ENCODE measurements at regions of chr12 and their contacts with region 1.

Region 1: DNA sequence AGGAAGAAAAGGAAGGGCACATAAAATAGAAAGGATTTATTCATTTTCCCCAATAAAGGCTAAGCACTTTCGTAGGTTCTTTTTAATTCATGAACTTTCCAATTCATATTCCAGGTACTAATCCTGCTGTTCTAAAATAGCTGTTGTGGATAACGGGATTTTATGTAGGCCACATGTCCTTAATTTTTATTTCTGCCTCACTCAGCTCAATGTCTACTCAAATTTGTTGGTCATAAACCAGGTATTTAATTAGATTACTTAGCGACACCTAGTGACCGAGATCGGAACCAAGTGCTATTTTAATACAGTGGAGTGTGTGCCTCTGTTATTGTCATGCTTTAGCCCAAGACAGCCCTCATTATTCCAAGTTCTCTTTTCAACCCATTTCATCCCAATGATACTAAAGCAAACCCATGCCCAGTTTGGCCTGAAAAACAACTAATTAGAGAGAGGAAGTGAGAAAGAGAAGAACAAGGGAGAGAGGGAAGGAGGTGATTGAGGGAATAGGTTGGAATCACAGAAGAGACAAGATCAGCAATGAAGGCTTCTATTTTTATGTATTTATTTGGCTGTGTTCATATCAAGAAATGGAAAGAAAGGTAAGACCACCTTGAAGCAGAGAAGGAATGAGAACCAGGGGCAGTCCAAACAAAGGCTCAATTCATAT is 45.9 kb upstream of the IFNG-AS1 start:
- DNase-seq: peak; percentile 57 to 77 (median 68)
- H3K4me3 ChIP-seq: no peak overlapping the region
- H3K27ac ChIP-seq: no peak overlapping the region
- H3K4me1 ChIP-seq: no peaks in the 10 kb centered on the region
- H3K27me3 ChIP-seq: no peaks in the 10 kb centered on the region

Region 2: DNA sequence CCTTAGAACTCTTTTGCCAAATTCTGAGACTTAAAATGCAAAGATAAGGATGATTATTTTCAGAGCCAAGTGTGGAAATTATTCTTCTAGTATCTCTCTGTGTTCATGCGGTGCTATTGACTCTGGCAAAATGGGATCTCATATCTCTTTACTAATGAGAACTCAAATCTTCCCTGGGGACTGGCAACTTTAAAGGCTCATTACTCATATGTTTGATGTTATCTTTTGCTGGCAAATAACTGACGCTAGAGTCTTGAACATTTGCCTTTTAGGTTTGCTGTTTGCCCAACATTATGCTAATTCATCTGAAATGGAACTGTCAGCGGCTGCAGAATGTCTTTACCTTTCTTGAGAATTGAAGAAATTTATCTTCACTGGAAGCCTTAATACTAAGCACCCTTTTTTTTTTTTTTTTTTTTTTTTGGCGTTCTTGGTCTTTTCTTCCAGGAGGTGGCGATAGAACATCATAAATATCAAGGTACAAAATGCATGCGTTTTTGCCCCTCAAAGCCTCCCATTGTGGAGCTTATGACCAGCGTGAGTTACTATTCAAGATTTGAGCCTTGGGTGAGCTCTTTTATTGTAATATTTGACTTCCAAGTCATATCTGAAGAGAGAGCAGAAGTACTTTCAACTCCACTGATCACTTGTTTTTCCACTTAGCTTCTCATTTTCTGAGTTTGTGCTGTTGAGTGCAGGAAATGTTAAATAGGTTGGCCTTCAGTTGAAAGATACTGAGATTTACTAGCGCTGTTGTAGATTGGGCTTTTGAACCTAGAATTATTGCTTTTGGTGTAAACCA is 587.6 kb before region 1 on chr12:
- CTCF ChIA-PET with region 1: interaction called, 78 read pairs
- POLR2A ChIA-PET with region 1: no interaction called
- DNase-seq: peak; percentile 54 to 82 (median 78)
- H3K4me3 ChIP-seq: no peak overlapping the region
- H3K27ac ChIP-seq: no peak overlapping the region
- H3K4me1 ChIP-seq: peaks cover 0 to 15% (median 6%) of the 10 kb centered on the region in 4 experiments
- H3K27me3 ChIP-seq: no peaks in the 10 kb centered on the region

Region 3: DNA sequence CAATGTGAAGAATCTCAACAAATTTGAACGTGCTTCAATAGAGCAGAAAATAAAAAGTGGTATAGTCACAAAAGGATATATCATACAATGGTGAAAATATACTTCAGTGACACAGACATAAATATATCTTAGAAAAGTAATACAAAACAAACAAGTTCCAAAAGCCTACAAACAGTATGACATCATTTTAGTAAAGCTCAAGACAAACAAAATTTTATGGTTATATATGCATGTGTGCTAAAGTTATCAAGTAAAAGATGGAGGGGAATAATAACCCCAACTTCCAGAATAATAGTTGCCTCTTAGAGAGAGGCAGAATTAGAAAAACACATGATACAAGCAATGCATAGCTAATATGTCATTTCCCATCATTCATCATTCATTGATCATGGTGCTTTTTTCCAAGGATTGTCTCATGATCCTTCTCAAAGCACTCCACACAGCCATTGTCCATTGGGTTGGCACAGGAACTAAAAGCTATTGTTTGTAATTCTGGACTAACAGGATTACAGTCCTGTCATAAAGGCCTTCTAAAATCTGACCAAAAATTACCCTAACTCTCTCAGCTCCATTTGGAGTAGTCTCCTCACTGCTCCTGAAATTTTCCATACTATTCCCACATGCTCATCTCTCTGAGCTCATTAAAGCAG is 105.4 kb after region 1 on chr12:
- CTCF ChIA-PET with region 1: no interaction called
- POLR2A ChIA-PET with region 1: no interaction called
- DNase-seq: no peak
- H3K4me3 ChIP-seq: no peak overlapping the region
- H3K27ac ChIP-seq: no peak overlapping the region
- H3K4me1 ChIP-seq: no peaks in the 10 kb centered on the region
- H3K27me3 ChIP-seq: peaks cover 0 to 3% (median 2%) of the 10 kb centered on the region in 5 experiments

Region 4: GRCh38 chr12:68317047-68317667 is 373.8 kb after region 1 on chr12:
- CTCF ChIA-PET with region 1: no interaction called
- POLR2A ChIA-PET with region 1: no interaction called
- DNase-seq: peak; percentile 63 to 84 (median 80)
- H3K4me3 ChIP-seq: no peak overlapping the region
- H3K27ac ChIP-seq: no peak overlapping the region
- H3K4me1 ChIP-seq: no peaks in the 10 kb centered on the region
- H3K27me3 ChIP-seq: no peaks in the 10 kb centered on the region